ENCODE measurements at regions of chr2 and their contacts with region 1.

Region 1: GRCh38 chr2:100739735-100740432 is 80.1 kb upstream of the NPAS2 start:
- DNase-seq: no peak
- H3K4me3 ChIP-seq: no peak overlapping the region
- H3K27ac ChIP-seq: no peak overlapping the region
- H3K4me1 ChIP-seq: peaks cover 4% of the 10 kb centered on the region
- H3K27me3 ChIP-seq: peaks cover 0 to 1% of the 10 kb centered on the region in 2 experiments
- CTCF ChIP-seq: no peak
- POLR2A ChIP-seq: no peak

Region 2: DNA sequence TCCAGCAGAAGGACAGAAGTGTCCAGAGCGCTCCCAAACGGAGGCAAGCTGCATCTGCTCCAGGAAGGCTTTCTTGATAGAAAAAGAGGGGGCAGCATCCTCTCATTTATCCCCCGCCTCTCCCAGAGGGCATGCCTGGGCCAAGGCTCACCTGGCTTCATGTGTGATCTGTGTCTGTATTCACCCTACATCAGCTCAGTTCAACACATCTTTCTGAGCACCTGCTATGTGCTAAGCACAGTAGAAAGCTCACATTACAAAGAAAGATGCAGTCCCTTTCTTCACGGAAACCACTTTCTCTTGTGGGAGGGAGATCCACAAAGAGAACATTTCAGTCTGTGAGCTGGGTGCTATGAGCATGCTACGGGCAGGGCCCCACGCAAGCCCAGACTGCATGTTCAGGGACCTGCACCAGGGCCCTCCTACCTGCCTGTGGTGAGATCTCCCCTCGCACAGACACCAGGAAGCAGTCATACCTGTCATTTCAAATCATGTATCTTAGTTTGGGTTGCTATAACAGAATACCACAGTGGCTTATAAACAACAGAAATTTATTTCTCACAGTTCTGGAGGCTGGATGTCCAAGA is 86.3 kb before region 1 on chr2:
- CTCF ChIA-PET with region 1: no interaction called
- POLR2A ChIA-PET with region 1: no interaction called
- dilution Hi-C with region 1: no loop called
- intact Hi-C with region 1: no loop called
- DNase-seq: no peak
- H3K4me3 ChIP-seq: no peak overlapping the region
- H3K27ac ChIP-seq: no peak overlapping the region
- H3K4me1 ChIP-seq: no peaks in the 10 kb centered on the region
- H3K27me3 ChIP-seq: peaks cover 7 to 8% of the 10 kb centered on the region in 2 experiments
- CTCF ChIP-seq: no peak
- POLR2A ChIP-seq: no peak

Region 3: DNA sequence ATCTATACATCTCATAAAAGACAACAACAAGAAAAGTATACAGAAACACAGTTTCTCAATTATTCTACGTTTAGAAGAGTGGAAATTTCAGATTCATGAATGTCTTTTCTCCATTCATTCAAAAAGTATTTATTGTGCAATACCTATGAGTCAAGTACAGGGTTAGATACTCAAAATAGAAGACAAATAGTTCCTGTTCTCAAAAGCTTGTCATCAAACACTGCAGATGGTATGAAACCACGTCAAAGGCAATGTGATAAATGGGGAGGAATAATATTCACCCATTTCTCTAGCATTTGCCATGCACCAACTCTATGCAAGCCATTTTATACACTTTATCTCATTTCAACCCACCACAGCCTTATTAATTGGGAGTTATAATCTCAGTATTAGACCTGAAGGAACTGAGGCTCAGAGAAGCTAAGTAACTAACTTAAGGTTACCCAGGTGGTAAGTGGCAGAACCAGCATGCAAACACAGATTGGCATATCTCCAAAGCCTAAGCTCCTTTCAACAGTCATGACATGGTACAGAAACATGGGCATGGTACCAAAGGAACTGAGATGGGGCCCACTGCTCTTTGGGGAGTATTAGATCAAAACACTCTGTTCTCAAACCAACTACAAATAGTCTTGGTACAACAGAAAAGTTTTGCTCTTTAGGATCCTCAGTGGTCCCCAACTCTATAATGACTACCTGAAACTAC is 12.9 kb after region 1 on chr2:
- CTCF ChIA-PET with region 1: interaction called, 4 read pairs
- POLR2A ChIA-PET with region 1: no interaction called
- dilution Hi-C with region 1: no loop called
- intact Hi-C with region 1: loop called (anchors 1 kb)
- DNase-seq: no peak
- H3K4me3 ChIP-seq: no peak overlapping the region
- H3K27ac ChIP-seq: no peak overlapping the region
- H3K4me1 ChIP-seq: peaks cover 13% of the 10 kb centered on the region
- H3K27me3 ChIP-seq: no peaks in the 10 kb centered on the region
- CTCF ChIP-seq: no peak
- POLR2A ChIP-seq: no peak